ENCODE measurements at regions of chr3 and their contacts with region 1.

Region 1: GRCh38 chr3:157532529-157533297 is 29.5 kb upstream of the VEPH1 start:
- DNase-seq: peak in 1 of 2 experiments; percentile 21
- H3K4me3 ChIP-seq: no peak overlapping the region
- H3K27ac ChIP-seq: peak overlapping the region; percentile 37; the same call in 1 of the 2 replicates
- H3K4me1 ChIP-seq: peaks cover 0 to 3% (median 1%) of the 10 kb centered on the region in 4 experiments; a peak in 2 of 7 replicates
- H3K27me3 ChIP-seq: no peaks in the 10 kb centered on the region
- CTCF ChIP-seq: peak in 2 of 3 experiments; percentile 79 to 80; a peak in 3 of 4 replicates
- EP300 ChIP-seq: no peak
- POLR2A ChIP-seq: no peak
- RAD21 ChIP-seq: peak; percentile 89 to 92

Region 2: GRCh38 chr3:157493627-157494550 is 38.8 kb before region 1 on chr3:
- CTCF ChIA-PET with region 1: interaction called, 31 read pairs
- POLR2A ChIA-PET with region 1: interaction called, 6 read pairs
- DNase-seq: no peak
- H3K4me3 ChIP-seq: no peak overlapping the region
- H3K27ac ChIP-seq: no peak overlapping the region
- H3K4me1 ChIP-seq: peaks cover 4 to 10% (median 6%) of the 10 kb centered on the region in 4 experiments; a peak in 5 of 7 replicates
- H3K27me3 ChIP-seq: no peaks in the 10 kb centered on the region
- CTCF ChIP-seq: peak in 2 of 3 experiments; percentile 17 to 61; a peak in 2 of 4 replicates
- EP300 ChIP-seq: no peak
- POLR2A ChIP-seq: no peak
- RAD21 ChIP-seq: peak; percentile 54 to 57

Region 3: GRCh38 chr3:157542711-157543500 is 10.2 kb after region 1 on chr3:
- CTCF ChIA-PET with region 1: interaction called, 42 read pairs
- POLR2A ChIA-PET with region 1: interaction called, 12 read pairs
- DNase-seq: peak; percentile 25 to 85
- H3K4me3 ChIP-seq: peak overlapping the region; percentile 22 to 65 (median 39)
- H3K27ac ChIP-seq: no peak overlapping the region
- H3K4me1 ChIP-seq: no peaks in the 10 kb centered on the region; a peak in 1 of 7 replicates
- H3K27me3 ChIP-seq: peaks cover 0 to 5% (median 0%) of the 10 kb centered on the region in 4 experiments; a peak in 1 of 7 replicates
- CTCF ChIP-seq: peak; percentile 56 to 89 (median 86)
- EP300 ChIP-seq: no peak
- POLR2A ChIP-seq: no peak
- RAD21 ChIP-seq: peak; percentile 34 to 45; a peak in 3 of 4 replicates

Region 4: DNA sequence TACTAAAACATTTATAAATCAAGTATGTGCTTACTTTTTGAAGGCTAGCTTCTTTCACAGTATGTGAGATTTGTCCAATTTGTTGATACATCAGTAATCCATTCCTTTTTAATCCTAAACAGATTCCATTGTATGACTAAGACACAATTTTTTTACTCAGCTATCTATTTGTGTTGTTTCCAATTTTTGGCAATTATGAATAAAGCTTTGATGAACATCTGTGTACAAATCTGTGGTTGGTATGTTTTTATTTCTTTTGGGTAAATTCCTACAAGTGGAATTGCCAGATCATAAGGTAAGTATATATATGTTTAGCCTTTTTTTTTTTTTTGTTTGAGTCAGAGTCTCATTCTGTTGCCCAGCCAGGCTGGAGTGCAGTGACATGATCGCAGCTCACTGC is 26.7 kb after region 1 on chr3:
- CTCF ChIA-PET with region 1: interaction called, 13 read pairs
- POLR2A ChIA-PET with region 1: no interaction called
- DNase-seq: no peak
- H3K4me3 ChIP-seq: no peak overlapping the region
- H3K27ac ChIP-seq: no peak overlapping the region
- H3K4me1 ChIP-seq: no peaks in the 10 kb centered on the region
- H3K27me3 ChIP-seq: no peaks in the 10 kb centered on the region
- CTCF ChIP-seq: no peak
- EP300 ChIP-seq: no peak
- POLR2A ChIP-seq: no peak
- RAD21 ChIP-seq: no peak

Region 5: DNA sequence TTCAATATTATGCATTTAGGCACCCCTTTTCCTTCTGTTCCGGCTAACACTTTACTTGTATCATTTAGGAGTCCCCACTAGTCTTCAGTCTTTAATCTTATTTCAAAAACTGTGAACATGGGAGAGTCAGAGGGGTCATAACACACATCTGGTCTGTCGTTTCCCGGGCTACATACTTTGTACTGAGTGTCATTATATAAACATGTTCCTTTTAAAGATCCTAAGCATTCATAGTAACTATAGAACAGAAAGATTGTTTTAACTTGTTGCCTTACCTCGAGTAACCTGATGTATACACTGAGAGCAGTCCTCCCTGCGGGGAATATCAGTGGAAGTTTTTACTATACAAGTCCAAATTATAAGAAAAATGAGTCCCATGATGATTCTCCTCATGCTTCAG is 48.7 kb after region 1 on chr3:
- CTCF ChIA-PET with region 1: interaction called, 116 read pairs
- POLR2A ChIA-PET with region 1: no interaction called
- DNase-seq: no peak
- H3K4me3 ChIP-seq: no peak overlapping the region
- H3K27ac ChIP-seq: no peak overlapping the region
- H3K4me1 ChIP-seq: no peaks in the 10 kb centered on the region
- H3K27me3 ChIP-seq: no peaks in the 10 kb centered on the region
- CTCF ChIP-seq: no peak
- EP300 ChIP-seq: no peak
- POLR2A ChIP-seq: no peak
- RAD21 ChIP-seq: no peak

Region 6: GRCh38 chr3:157606011-157606851 is 73.5 kb after region 1 on chr3:
- CTCF ChIA-PET with region 1: interaction called, 12 read pairs
- POLR2A ChIA-PET with region 1: no interaction called
- DNase-seq: peak; percentile 67 to 94
- H3K4me3 ChIP-seq: no peak overlapping the region; a peak in 1 of 8 replicates
- H3K27ac ChIP-seq: no peak overlapping the region
- H3K4me1 ChIP-seq: no peaks in the 10 kb centered on the region
- H3K27me3 ChIP-seq: no peaks in the 10 kb centered on the region
- CTCF ChIP-seq: peak; percentile 75 to 86 (median 84)
- EP300 ChIP-seq: no peak
- POLR2A ChIP-seq: no peak
- RAD21 ChIP-seq: peak; percentile 57 to 69

Measured in H1 (cell line).